Activated CD8-positive, alpha-beta memory T cell treated with anti-CD3 and anti-CD28 coated beads, Interleukin-2, amount 10 ng/mL, durations not matched to agents 7 days and 5 days (primary cell): ENCODE measurements at regions of chr3 and their contacts with region 1.

Region 1: DNA sequence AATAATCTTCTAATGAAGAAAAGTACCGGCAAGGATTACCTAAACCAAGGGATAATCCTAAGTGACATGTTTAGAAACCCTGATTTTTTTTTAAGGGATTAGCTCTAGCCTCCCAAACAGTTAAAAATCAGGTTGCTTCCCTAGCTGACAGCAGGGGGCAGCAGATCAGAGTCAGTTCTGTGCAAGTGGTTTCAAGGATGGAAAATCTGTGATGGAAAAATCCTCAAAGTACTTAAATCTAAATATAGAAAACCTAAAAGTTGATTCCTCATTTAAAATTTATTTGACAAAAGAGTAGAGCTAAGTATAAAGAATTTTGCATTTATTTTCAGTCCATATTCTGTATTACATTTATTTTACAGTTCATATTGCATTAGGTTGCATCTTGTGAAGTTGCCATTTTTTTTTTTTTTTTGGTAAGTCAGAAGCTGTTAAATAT is 107.6 kb downstream of the PEX5L start:
- DNase-seq: peak; percentile 65
- ATAC-seq: no peak
- H3K4me3 Mint-ChIP-seq: no peak overlapping the region
- H3K27ac Mint-ChIP-seq: no peak overlapping the region
- H3K4me1 Mint-ChIP-seq: peaks cover 1% of the 10 kb centered on the region
- H3K27me3 Mint-ChIP-seq: peaks cover 43% of the 10 kb centered on the region

Region 2: DNA sequence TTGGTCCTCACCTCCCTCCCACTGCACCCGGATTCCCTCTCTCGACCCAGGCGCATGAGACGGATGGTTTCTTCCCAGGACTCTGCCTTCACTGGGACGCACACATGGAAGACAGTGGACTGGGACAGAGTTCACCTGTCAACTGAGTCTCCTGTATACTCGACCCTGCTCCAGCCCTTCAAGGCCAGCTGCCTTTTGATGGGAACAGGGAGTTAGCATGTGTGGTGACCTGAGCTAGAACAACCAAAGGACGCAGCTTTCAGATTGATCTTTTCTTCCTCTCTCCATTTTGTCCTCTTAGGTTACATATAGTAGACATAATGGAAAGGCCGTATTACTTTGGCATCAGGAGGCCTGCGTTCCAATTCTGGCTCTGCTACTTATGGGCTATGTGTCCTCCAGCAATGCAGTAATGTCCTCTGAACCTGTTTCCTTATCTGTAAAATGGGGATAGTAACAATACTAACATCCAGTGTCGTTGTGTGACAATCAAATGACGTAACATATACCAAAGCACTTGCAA is 13.5 kb after region 1 on chr3:
- CTCF ChIA-PET with region 1: interaction called, 11 read pairs
- DNase-seq: no peak
- ATAC-seq: no peak
- H3K4me3 Mint-ChIP-seq: peak overlapping the region; percentile 35
- H3K27ac Mint-ChIP-seq: no peak overlapping the region
- H3K4me1 Mint-ChIP-seq: peaks cover 3% of the 10 kb centered on the region
- H3K27me3 Mint-ChIP-seq: peaks cover 67% of the 10 kb centered on the region

Region 3: DNA sequence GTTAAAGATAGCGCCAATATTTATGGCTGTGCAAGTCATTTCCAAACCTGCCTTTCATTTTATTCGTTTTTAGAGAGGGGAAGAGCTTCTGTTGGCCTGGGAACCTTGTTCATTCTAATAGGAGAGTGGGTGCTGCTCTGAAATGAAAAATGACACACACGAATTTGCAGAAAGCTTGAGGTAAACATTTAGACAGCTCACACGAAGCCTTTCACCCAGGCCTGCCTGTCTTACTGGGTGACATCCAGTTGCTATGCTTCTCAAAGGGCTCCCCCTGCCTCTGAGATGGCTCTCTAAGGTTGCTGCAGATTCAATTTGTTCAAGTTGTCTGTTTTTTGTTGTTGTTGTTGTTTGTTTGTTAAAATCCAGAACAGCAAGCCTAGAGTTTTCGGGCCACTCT is 89.4 kb after region 1 on chr3:
- CTCF ChIA-PET with region 1: interaction called, 12 read pairs
- DNase-seq: no peak
- ATAC-seq: no peak
- H3K4me3 Mint-ChIP-seq: no peak overlapping the region
- H3K27ac Mint-ChIP-seq: no peak overlapping the region
- H3K4me1 Mint-ChIP-seq: no peaks in the 10 kb centered on the region
- H3K27me3 Mint-ChIP-seq: no peaks in the 10 kb centered on the region